ENCODE measurements at regions of chr9 and their contacts with region 1.

Region 1: GRCh38 chr9:87950765-87951488 is 23.4 kb downstream of the CDK20 start:
- DNase-seq: peak; percentile 62
- CTCF ChIP-seq: no peak

Region 2: DNA sequence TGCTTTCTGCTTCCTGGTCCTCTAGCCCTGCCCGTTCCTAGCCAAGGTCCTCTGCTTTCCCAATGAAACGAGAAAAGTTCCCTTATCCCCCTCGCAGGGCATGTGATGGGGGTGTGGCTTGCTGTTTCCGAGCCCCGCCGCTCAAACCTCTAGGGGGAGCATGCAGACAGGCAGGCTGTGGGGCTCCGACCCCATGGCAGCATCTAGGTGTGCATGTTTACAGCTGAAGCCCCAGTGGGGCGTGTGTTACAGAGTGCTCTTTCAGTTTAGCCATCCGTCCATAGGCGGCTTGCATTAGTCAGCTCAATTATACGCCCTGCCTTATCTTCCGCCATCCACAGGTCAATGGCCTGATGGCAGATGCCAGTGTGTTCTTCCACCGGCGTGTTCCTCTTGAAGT is 116.6 kb before region 1 on chr9:
- in situ Hi-C with region 1: no loop called
- DNase-seq: no peak
- CTCF ChIP-seq: no peak

Region 3: GRCh38 chr9:88574953-88575352 is 624.0 kb after region 1 on chr9:
- in situ Hi-C with region 1: loop called (anchors 25 kb)
- DNase-seq: no peak
- CTCF ChIP-seq: no peak